PC-9 (cell line): ENCODE measurements at regions of chr12 and their contacts with region 1.

Region 1: GRCh38 chr12:54005853-54006686 is 2.7 kb upstream of the HOXC8 start:
- DNase-seq: peak; percentile 55 to 85
- H3K4me3 ChIP-seq: no peak overlapping the region
- H3K27ac ChIP-seq: no peak overlapping the region
- H3K4me1 ChIP-seq: no peaks in the 10 kb centered on the region
- H3K27me3 ChIP-seq: no peaks in the 10 kb centered on the region
- CTCF ChIP-seq: peak; percentile 94

Region 2: DNA sequence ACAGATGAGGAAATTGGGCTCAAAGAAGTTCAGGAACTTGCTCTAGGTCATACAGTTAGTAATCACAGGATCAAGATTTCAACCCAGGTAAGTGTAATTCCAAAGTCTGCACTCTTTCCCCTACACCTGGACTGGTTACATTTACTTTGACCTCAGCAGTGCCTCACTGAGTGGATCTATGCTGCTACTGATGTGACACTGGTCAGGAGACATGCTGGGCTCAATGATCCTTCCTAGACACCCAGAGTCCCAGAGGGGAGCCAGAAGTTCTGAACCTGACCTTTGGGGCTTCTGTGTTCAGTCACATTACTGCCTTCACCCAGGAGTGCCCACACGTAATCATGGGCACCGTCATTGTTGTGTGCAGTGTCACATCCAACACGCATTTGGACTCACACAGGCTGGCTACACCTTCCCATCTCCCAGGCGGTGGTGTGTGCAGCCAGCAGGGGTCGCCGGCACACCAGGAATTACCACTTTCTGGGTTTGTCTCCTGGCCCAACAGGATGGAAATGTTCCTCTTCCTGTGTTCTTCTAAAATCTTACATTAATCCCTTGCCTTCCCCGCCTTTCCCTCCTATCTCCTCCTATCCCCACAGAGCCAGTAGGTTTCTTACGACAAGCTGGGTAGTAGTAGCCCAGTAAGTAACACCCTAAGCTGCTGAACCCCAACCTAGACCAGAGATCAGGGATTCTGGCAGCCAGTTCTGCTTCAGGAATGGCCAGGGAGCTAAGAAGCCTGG is 304.4 kb before region 1 on chr12:
- CTCF ChIA-PET with region 1: no interaction called
- POLR2A ChIA-PET with region 1: no interaction called
- intact Hi-C with region 1: loop called (anchors 5 kb)
- DNase-seq: peak in 1 of 2 experiments; percentile 79
- H3K4me3 ChIP-seq: no peak overlapping the region
- H3K27ac ChIP-seq: no peak overlapping the region
- H3K4me1 ChIP-seq: peaks cover 3% of the 10 kb centered on the region; the same call in 1 of the 2 replicates
- H3K27me3 ChIP-seq: peaks cover 22% of the 10 kb centered on the region
- CTCF ChIP-seq: peak; percentile 82

Region 3: GRCh38 chr12:54136827-54137580 is 130.9 kb after region 1 on chr12:
- CTCF ChIA-PET with region 1: interaction called, 15 read pairs
- POLR2A ChIA-PET with region 1: no interaction called
- intact Hi-C with region 1: no loop called
- DNase-seq: no peak
- H3K4me3 ChIP-seq: no peak overlapping the region
- H3K27ac ChIP-seq: no peak overlapping the region
- H3K4me1 ChIP-seq: no peaks in the 10 kb centered on the region
- H3K27me3 ChIP-seq: peaks cover 28% of the 10 kb centered on the region
- CTCF ChIP-seq: no peak

Region 4: DNA sequence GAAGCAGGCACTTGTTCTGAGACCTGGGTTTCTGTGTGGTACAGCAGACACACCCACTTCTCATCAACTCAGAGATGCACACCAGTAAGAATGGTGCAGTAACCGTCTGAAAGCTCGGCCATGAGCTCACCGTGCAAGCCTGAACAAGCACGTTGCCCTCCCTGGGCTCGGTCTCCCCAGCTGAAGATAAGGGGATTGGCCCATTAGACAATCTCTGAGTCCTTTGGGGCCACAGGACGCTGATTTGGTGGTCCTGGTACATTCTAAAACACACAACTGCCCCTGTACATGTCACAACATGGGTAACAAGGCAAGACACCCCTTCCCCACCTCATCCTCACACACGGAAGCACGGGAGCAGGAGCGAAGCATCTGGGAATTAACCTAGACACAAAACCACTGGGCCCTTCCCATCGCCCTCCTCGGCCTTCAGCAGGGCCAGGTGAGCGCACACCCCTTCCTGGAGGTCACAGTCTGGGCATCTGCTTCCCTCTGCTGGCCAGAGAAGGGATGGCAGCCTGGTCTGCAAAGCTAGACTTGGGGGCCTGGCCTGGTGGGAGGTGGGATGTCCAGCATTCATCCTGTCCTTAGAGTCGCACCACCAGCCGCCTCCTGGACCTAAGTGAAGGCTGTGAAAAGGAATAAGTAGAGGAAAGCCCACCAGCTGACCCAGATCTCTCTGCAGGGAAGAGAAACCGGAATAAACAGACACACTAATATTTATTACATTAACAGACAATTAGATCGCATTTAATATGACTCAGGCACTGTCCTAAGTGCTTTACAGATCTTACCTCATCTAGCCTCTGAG is 201.6 kb after region 1 on chr12:
- CTCF ChIA-PET with region 1: interaction called, 3 read pairs
- POLR2A ChIA-PET with region 1: no interaction called
- intact Hi-C with region 1: loop called (anchors 1 kb)
- DNase-seq: peak; percentile 62 to 82
- H3K4me3 ChIP-seq: no peak overlapping the region
- H3K27ac ChIP-seq: no peak overlapping the region
- H3K4me1 ChIP-seq: no peaks in the 10 kb centered on the region
- H3K27me3 ChIP-seq: no peaks in the 10 kb centered on the region
- CTCF ChIP-seq: peak; percentile 96

Region 5: GRCh38 chr12:54379401-54380201 is 373.5 kb after region 1 on chr12:
- CTCF ChIA-PET with region 1: interaction called, 3 read pairs
- POLR2A ChIA-PET with region 1: no interaction called
- intact Hi-C with region 1: loop called (anchors 5 kb)
- DNase-seq: peak; percentile 73 to 91
- H3K4me3 ChIP-seq: peak overlapping the region; percentile 59; the same call in 1 of the 2 replicates
- H3K27ac ChIP-seq: no peak overlapping the region
- H3K4me1 ChIP-seq: peaks cover 29% of the 10 kb centered on the region
- H3K27me3 ChIP-seq: no peaks in the 10 kb centered on the region
- CTCF ChIP-seq: peak; percentile 100